ENCODE measurements at regions of chr17 and their contacts with region 1.

Region 1: DNA sequence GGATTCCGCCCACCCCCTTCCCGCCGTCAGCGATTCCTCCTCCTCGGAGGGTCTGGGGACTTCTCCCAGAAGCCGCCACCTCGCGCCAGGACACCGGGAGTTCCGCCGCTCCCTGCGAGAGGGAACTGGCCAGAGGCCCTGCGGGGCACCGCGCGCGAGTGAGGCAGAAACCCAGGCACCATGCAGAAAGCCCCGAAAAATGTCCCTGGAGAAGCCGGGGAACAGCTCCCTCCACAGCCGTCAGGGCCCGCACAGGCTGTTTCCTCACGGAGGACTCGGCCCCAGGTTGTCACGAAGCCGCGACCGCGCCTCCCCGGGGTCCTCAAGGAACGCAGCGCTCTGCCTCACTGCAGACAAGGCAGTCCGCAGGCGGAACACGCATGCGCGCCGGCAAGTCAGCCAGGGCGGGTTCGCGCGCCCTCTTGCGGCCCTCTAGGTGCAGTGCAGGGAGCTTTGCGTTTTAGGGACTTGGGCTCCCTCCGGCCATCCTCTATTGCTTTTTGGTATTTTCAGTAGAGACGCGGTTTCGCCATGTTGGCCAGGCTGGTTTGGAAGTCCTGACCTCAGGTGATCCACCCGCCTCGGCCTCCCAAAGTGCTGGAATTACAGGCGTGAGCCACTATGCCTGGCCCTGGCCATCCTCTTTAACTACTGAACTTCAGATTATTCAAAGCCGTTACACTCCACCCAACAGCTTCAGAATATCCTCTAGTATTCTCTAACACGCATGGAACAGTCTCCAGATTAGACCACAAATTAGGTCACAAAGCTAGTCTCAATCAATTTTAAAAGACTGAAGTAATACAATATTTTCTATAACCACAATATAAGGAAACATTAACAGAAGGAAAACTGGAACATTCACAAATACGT is 20.3 kb upstream of the ZNF287 start:
- DNase-seq: peak; percentile 62 to 94
- H3K4me3 ChIP-seq: peak overlapping the region; percentile 68
- H3K27ac ChIP-seq: no peak overlapping the region
- H3K4me1 ChIP-seq: no peaks in the 10 kb centered on the region
- H3K27me3 ChIP-seq: no peaks in the 10 kb centered on the region
- CTCF ChIP-seq: peak; percentile 87

Region 2: DNA sequence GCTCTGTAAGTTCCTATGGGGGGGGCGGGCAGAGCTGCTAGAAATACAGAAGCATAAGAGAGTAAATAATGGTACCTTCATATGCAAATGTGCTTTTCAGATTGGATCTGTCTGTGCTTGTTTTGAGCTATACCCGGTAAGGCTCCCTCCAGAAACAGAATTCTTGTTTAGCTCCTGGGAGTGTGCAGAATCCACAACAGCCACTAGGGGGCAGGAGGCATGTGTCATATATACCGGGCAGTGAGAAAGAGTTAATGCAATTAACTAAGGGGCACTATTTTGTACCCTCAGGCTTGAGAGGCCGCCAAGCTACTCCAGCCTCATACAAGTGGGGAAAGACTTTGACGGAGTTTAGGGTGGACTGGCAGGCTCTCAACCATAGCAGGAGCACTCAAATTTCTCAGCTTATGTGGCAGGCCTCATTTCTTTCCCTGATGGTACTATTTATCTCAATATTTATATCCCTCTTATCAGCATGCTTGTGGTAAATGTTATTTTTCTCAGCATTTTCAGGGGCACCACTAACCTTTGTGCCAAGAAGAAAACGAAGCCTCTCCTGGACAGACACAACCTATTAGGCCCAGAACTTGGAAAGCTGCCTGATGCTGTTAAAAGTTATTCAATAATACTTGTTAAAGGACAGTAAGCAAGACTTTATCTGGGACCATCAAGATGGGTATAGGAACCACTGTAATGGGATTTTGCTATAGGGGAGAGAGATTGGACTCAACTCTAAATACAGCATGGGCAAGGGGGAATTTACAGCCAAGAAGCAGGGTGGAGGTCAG is 225.4 kb before region 1 on chr17:
- CTCF ChIA-PET with region 1: no interaction called
- POLR2A ChIA-PET with region 1: interaction called, 4 read pairs
- intact Hi-C with region 1: loop called (anchors 10 kb)
- DNase-seq: peak in 1 of 2 experiments; percentile 73
- H3K4me3 ChIP-seq: no peak overlapping the region
- H3K27ac ChIP-seq: no peak overlapping the region
- H3K4me1 ChIP-seq: no peaks in the 10 kb centered on the region
- H3K27me3 ChIP-seq: no peaks in the 10 kb centered on the region
- CTCF ChIP-seq: peak; percentile 90

Region 3: DNA sequence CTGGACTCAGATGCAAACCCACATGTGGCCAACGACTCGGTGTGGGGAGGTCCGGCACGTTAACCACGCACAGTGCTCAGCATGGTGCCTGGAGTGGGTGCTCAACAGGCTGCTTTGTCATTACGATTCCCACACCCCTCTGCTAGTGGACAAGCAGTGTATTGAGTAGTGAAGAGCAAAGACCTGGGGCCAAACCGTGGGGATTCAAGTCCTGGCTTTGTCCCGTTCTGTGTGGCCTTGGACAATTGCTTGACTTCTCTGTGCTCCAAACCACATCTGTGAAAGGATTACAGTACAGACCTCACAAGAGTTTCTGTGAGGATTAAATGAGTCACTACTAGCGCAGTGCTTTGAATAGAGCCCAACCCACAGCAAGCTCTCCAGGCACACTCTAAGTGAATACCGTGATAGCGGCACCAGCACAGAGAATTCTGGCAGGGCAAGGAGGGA is 140.2 kb before region 1 on chr17:
- CTCF ChIA-PET with region 1: interaction called, 3 read pairs
- POLR2A ChIA-PET with region 1: no interaction called
- intact Hi-C with region 1: loop called (anchors 5 kb)
- DNase-seq: no peak
- H3K4me3 ChIP-seq: no peak overlapping the region
- H3K27ac ChIP-seq: no peak overlapping the region
- H3K4me1 ChIP-seq: no peaks in the 10 kb centered on the region
- H3K27me3 ChIP-seq: no peaks in the 10 kb centered on the region
- CTCF ChIP-seq: no peak

Region 4: GRCh38 chr17:16512011-16512410 is 77.3 kb before region 1 on chr17:
- CTCF ChIA-PET with region 1: no interaction called
- POLR2A ChIA-PET with region 1: no interaction called
- intact Hi-C with region 1: no loop called
- DNase-seq: no peak
- H3K4me3 ChIP-seq: no peak overlapping the region
- H3K27ac ChIP-seq: no peak overlapping the region
- H3K4me1 ChIP-seq: peaks cover 9% of the 10 kb centered on the region
- H3K27me3 ChIP-seq: no peaks in the 10 kb centered on the region
- CTCF ChIP-seq: no peak

Region 5: DNA sequence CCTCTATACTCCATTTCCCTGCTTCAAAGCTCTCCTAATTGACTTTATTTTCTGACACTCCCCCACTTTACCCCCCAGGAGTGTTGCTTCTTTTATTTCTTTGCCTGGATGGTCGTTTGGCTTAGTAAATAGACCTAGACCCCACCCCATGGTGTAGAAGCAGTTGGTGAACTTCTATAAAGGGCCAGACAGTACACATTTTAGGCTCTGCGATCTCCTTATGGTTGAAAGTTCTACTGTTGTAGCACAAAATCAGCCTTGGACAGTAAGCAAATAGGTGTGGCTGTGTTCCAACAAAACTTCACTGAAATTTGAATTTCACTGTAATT is 52.2 kb before region 1 on chr17:
- CTCF ChIA-PET with region 1: interaction called, 5 read pairs
- POLR2A ChIA-PET with region 1: interaction called, 5 read pairs
- intact Hi-C with region 1: loop called (anchors 2 kb)
- DNase-seq: no peak
- H3K4me3 ChIP-seq: no peak overlapping the region; the same call in 1 of the 2 replicates
- H3K27ac ChIP-seq: no peak overlapping the region
- H3K4me1 ChIP-seq: no peaks in the 10 kb centered on the region
- H3K27me3 ChIP-seq: no peaks in the 10 kb centered on the region
- CTCF ChIP-seq: 0 out of 2 replicates have a peak, but pooled peaks have one; percentile 7

Region 6: DNA sequence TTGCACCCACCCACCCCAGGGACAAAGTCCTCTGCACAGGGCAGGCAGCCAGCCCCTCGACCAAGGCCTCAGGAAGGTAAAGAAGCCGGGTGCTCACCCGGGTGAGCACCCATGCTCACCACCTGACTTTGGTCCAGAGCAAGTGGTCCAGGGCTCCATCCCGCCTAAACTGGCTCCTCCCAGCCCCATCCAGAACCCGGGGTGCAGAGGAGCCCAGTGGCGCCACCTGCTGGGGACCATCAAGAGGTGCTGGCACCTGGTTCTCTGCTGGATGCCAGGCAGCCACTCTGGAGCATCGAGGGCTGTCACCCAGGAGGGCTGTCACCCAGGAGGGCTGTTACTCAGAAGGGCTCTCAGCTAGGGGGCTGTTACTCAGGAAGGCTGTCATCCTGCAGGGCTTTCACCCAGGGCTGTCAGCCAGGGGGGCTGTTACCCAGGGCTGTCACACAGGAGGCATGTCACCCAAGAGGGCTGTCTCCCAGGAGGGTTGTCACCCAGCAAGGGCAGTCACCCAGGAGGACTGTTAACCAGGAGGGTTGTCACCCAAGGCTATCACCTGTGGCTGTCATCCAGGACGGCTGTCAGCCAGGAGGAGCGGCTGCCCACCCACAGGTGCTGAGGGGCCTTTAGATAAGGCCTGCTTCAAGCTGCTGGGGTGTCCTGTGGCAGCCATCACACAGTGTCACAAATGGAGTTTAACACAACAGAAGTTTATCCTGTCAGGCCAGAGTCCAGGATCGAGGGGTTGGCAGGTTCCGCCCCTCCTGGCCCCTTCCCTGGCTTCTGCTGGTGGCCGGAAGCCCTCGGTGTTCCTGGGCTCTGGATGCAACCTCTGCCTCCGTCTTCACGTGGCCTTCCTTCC is 284.1 kb after region 1 on chr17:
- CTCF ChIA-PET with region 1: no interaction called
- POLR2A ChIA-PET with region 1: no interaction called
- intact Hi-C with region 1: loop called (anchors 5 kb)
- DNase-seq: peak in 1 of 2 experiments; percentile 46
- H3K4me3 ChIP-seq: no peak overlapping the region
- H3K27ac ChIP-seq: no peak overlapping the region
- H3K4me1 ChIP-seq: peaks cover under 1% of the 10 kb centered on the region
- H3K27me3 ChIP-seq: no peaks in the 10 kb centered on the region
- CTCF ChIP-seq: peak; percentile 96

Region 7: DNA sequence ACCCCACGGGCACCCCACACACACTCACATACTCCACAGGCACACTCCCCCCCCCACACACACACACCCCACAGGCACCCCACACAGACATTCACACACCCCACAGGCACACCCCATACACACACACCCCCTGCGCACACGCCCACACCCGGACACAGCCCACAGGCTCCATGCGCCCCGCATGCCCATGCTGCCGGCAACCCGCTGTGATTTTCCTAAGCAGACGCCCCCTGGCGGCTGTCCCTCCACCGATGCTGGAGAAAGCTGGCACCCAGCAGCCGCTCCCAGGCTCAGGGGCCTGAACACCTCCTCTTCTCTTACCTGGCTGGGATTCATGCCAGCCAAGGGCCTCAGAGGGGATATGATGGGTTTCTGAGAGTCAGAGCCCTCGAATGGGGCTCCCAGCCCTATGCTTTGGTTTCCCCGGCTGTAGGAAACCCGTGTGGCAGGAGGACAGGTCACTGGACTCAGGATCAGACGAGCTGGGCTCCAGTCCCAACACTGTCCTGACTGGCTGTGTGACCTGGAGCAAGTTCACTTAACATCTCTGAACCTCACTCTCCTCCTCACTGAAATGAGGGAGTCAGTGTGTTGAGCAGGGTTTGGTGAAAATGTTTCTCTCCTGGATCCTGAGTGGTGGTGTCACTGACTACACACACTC is 402.1 kb after region 1 on chr17:
- CTCF ChIA-PET with region 1: interaction called, 3 read pairs
- POLR2A ChIA-PET with region 1: no interaction called
- intact Hi-C with region 1: loop called (anchors 1 kb)
- DNase-seq: peak; percentile 62 to 79
- H3K4me3 ChIP-seq: no peak overlapping the region
- H3K27ac ChIP-seq: no peak overlapping the region
- H3K4me1 ChIP-seq: peaks cover 19% of the 10 kb centered on the region
- H3K27me3 ChIP-seq: no peaks in the 10 kb centered on the region
- CTCF ChIP-seq: peak; percentile 91

Measured in PC-9 (cell line).